ENCODE measurements at regions of chr9 and their contacts with region 1.

Region 1: GRCh38 chr9:69186841-69187611 is 12.9 kb downstream of the TJP2 start:
- DNase-seq: no peak
- H3K4me3 Mint-ChIP-seq: peak overlapping the region; percentile 36
- H3K27ac Mint-ChIP-seq: peak overlapping the region; percentile 89
- H3K4me1 Mint-ChIP-seq: peaks cover 52% of the 10 kb centered on the region
- H3K27me3 Mint-ChIP-seq: no peaks in the 10 kb centered on the region
- CTCF ChIP-seq: no peak

Region 2: DNA sequence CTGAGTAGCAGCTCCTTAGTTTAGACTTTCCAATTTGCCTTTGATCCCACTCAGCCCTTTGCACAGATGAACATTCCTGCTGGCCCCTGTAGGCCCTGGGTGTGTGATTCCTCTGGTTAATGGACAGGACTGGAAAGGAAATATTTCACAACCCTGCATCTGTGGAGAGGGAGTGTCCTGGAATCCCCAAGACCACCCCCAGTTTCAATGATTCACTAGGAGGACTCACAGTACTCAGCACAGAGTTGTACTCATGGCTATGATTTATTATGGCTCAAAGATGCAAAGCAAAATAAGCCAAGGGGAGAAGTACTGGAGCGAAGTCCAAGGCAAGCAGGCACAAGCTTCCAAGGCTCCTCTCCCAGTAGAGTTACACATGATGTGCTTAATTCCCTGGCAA is 55.3 kb before region 1 on chr9:
- CTCF ChIA-PET with region 1: interaction called, 4 read pairs
- intact Hi-C with region 1: loop called (anchors 5 kb)
- DNase-seq: peak; percentile 25
- H3K4me3 Mint-ChIP-seq: peak overlapping the region; percentile 67
- H3K27ac Mint-ChIP-seq: peak overlapping the region; percentile 4
- H3K4me1 Mint-ChIP-seq: peaks cover 53% of the 10 kb centered on the region
- H3K27me3 Mint-ChIP-seq: no peaks in the 10 kb centered on the region
- CTCF ChIP-seq: no peak

Region 3: GRCh38 chr9:69155341-69156030 is 31.5 kb before region 1 on chr9:
- CTCF ChIA-PET with region 1: interaction called, 13 read pairs
- intact Hi-C with region 1: loop called (anchors 2 kb)
- DNase-seq: peak; percentile 29
- H3K4me3 Mint-ChIP-seq: peak overlapping the region; percentile 50
- H3K27ac Mint-ChIP-seq: peak overlapping the region; percentile 89
- H3K4me1 Mint-ChIP-seq: peaks cover 31% of the 10 kb centered on the region
- H3K27me3 Mint-ChIP-seq: no peaks in the 10 kb centered on the region
- CTCF ChIP-seq: no peak